ENCODE measurements at regions of chr11 and their contacts with region 1.

Region 1: GRCh38 chr11:132028380-132029240 is 658.2 kb downstream of the NTM start:
- DNase-seq: peak in 3 of 4 donors; percentile 59 to 65 (median 64)
- ATAC-seq: peak; percentile 68
- H3K4me3 ChIP-seq: no peak overlapping the region
- H3K27ac ChIP-seq: no peak overlapping the region
- H3K4me1 ChIP-seq: no peaks in the 10 kb centered on the region
- H3K27me3 ChIP-seq: no peaks in the 10 kb centered on the region
- CTCF ChIP-seq: peak in 6 of 7 experiments; percentile 15 to 76 (median 58)
- POLR2A ChIP-seq: no peak

Region 2: GRCh38 chr11:131874070-131874469 is 154.5 kb before region 1 on chr11:
- intact Hi-C with region 1: loop called (anchors 5 kb)
- DNase-seq: no peak
- ATAC-seq: no peak
- H3K4me3 ChIP-seq: no peak overlapping the region
- H3K27ac ChIP-seq: no peak overlapping the region
- H3K4me1 ChIP-seq: no peaks in the 10 kb centered on the region
- H3K27me3 ChIP-seq: no peaks in the 10 kb centered on the region
- CTCF ChIP-seq: no peak
- POLR2A ChIP-seq: no peak

Region 3: GRCh38 chr11:131924457-131925201 is 104.0 kb before region 1 on chr11:
- intact Hi-C with region 1: no loop called
- DNase-seq: peak; percentile 57 to 76 (median 64)
- ATAC-seq: peak; percentile 80
- H3K4me3 ChIP-seq: no peak overlapping the region
- H3K27ac ChIP-seq: peak overlapping the region in 3 of 4 donors; percentile 13 to 64 (median 53)
- H3K4me1 ChIP-seq: peaks cover 34% of the 10 kb centered on the region
- H3K27me3 ChIP-seq: no peaks in the 10 kb centered on the region
- CTCF ChIP-seq: no peak
- POLR2A ChIP-seq: no peak

Measured in body of pancreas (tissue), 4 donors.